Left ventricle myocardium superior (tissue), 1 donor: ENCODE measurements at regions of chr2 and their contacts with region 1.

Region 1: DNA sequence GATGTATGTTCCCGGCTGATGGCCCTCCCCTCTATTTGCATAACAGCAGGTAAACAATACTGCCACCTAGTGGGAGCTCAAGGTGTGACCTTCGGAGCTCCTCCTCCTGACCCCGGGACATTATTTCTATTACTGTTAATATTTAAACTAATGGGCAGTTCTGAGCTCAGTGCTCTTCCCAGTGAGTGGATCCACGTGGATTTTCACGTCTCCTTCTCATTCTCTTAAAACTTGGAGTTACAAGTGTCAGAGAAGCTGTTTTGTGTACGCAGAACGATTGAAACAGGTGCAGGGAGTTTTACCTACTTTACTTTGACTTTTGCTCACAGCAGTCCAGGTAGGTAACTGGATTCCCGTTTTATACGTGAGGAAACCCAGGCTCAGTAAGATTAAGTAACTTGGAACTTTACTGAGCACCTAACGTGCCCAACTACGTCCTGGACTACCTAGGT is 127.3 kb downstream of the PRKCE start:
- DNase-seq: peak; percentile 41
- ATAC-seq: peak; percentile 73

Region 2: DNA sequence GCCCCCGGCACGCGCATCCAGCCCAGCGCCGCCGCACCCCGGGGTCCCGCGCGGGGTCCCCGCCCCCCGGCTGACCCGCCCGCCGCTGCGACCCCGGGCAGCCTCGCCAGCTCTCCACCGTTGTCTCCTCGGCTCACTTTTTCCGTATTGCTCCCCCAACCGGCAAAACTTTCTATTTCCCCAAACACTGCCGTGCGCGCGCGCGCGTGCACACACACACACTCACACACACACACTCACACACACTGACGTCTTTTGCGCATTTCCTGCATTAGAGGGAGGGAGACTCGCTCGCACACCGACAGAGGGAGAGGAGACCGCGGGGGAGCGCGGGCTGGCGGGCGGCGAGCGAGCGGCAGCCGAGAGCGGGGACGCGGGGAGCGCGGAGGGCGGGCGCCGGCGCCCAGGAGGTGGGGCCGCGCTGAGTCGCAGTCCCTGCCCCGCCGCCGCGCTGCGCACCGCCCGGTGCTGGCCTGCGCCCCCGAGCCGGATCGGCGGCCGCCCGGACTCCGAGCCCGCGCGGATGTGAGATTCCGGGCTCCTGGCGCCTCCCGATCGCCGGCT is 127.8 kb before region 1 on chr2:
- intact Hi-C with region 1: loop called (anchors 5 kb)
- DNase-seq: peak; percentile 95
- ATAC-seq: peak; percentile 81

Region 3: GRCh38 chr2:45960057-45960863 is 181.5 kb after region 1 on chr2:
- intact Hi-C with region 1: no loop called
- DNase-seq: no peak
- ATAC-seq: no peak